Activated CD4-positive, alpha-beta T cell treated with anti-CD3 and anti-CD28 coated beads, Interleukin-2, amount 10 ng/mL, durations not matched to agents 24 days and 14 days (primary cell): ENCODE measurements at regions of chr1 and their contacts with region 1.

Region 1: GRCh38 chr1:12619792-12620487 is 1.9 kb upstream of the DHRS3 start:
- DNase-seq: peak; percentile 94
- H3K4me3 Mint-ChIP-seq: peak overlapping the region; percentile 99
- H3K27ac Mint-ChIP-seq: peak overlapping the region; percentile 75
- H3K4me1 Mint-ChIP-seq: peaks cover 47% of the 10 kb centered on the region
- H3K27me3 Mint-ChIP-seq: no peaks in the 10 kb centered on the region

Region 2: DNA sequence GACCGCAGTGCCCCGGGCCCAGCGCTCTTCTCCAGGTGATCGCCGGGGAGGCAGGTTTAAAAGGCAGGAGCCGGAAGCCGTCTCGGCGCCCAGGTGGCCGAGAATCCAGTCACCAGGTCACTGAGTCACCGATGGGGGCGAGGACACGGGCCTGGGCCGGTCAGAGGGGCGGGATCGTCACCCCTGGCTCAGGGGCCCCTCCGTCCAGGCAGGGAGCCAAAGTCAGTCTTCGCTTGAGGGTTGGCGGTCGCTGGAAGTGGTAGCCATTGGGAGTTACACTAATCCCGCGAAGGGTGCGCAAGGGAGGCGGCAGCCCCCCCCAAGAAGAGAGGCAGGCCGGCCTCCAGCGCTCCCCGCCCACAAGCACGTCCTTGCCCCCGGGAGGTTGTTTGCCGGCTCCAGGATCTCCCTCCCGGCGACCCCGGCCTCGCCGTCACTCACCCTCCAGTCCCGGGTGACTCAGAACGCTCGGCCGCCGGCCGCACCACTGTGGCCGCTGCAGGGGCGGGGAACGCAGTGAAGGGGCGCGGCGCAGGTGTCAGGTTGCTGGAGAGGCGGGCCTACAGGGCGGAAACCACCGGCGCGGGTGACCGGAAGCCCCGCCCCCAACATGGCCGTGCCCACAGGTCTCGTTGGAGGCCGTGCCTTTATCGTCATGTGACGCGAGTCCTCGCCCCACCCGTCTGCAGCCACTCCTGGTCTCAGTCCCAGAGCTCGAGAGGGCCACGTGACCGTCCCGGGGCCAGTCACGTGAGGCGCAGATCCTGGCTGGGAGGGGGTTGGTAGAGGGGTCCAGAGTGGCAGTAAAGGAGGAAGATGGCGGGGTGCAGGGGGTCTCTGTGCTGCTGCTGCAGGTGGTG is 814.3 kb before region 1 on chr1 and contains the starts of genes CLCN6 and MTHFR:
- intact Hi-C with region 1: no loop called
- DNase-seq: peak; percentile 100
- H3K4me3 Mint-ChIP-seq: peak within 1 kb of the TSS; percentile 99
- H3K27ac Mint-ChIP-seq: peak within 1 kb of the TSS; percentile 95
- H3K4me1 Mint-ChIP-seq: peaks cover 53% of the 10 kb centered on the region
- H3K27me3 Mint-ChIP-seq: no peaks in the 10 kb centered on the region
- total RNA-seq, gene CLCN6: 12.7 and 15.2 TPM in 2 replicates
- total RNA-seq, gene MTHFR: 15.6 and 18.4 TPM in 2 replicates

Region 3: GRCh38 chr1:12067900-12068821 is 551.8 kb before region 1 on chr1:
- intact Hi-C with region 1: loop called (anchors 5 kb)
- DNase-seq: peak; percentile 81
- H3K4me3 Mint-ChIP-seq: peak overlapping the region; percentile 71
- H3K27ac Mint-ChIP-seq: peak overlapping the region; percentile 94
- H3K4me1 Mint-ChIP-seq: peaks cover 55% of the 10 kb centered on the region
- H3K27me3 Mint-ChIP-seq: peaks cover 4% of the 10 kb centered on the region

Region 4: DNA sequence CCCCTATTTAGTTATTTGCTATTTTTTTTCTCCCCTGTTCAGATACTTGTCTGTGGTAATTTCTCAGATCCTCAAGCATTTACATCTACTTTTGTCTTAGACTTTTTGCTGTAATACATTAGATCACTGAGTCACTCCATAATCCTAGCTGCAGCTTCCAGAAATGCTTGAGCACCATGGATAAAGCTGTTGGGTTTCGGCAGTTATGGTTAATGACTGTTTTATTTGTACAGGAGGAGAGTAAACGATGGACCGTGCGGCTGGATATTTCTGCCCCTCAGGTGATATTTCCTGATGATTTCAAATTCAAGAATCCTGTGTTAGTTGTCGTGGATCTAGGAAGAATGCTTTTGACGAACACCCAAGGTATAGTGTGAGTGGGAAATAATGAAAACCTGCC is 347.2 kb before region 1 on chr1:
- intact Hi-C with region 1: loop called (anchors 1 kb)
- DNase-seq: no peak
- H3K4me3 Mint-ChIP-seq: no peak overlapping the region
- H3K27ac Mint-ChIP-seq: no peak overlapping the region
- H3K4me1 Mint-ChIP-seq: no peaks in the 10 kb centered on the region
- H3K27me3 Mint-ChIP-seq: no peaks in the 10 kb centered on the region

Region 5: DNA sequence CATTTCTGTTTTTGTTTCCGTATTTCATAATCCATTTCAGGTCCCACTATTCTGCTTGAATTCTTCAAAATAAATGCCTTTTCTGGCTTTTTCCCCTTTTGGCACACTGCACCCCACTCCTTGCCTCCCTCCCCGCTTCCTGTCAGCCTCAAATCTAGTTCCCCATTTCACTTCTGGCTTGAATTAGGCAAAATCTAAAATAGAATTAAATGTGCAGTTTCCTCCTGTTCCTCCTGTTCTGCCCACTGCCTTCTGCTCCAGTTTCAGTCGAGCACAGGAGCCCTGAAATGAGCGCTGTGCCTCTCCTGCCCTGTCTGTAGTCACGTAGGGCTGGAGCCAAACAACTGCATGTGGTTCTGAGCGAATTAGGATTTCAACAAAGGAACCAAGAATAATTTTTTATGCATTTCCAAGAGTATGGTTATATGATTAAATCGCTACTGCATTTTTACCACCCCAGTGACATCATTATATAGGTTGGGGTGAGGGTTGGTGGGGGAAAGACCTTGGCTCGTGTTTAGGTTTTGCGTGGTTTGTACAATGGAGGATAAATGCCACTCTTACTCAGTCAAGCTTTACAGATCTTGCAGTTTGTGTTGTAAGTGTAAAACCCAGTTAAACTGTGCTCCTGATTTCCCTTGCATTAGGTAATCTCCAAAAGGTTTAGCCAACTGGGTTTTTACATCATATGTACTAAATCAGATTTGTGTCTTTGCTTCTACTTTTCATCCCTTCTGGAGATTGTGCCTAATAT is 275.2 kb before region 1 on chr1:
- intact Hi-C with region 1: loop called (anchors 1 kb)
- DNase-seq: peak; percentile 67
- H3K4me3 Mint-ChIP-seq: peak overlapping the region; percentile 71
- H3K27ac Mint-ChIP-seq: peak overlapping the region; percentile 85
- H3K4me1 Mint-ChIP-seq: peaks cover 42% of the 10 kb centered on the region
- H3K27me3 Mint-ChIP-seq: no peaks in the 10 kb centered on the region

Region 6: DNA sequence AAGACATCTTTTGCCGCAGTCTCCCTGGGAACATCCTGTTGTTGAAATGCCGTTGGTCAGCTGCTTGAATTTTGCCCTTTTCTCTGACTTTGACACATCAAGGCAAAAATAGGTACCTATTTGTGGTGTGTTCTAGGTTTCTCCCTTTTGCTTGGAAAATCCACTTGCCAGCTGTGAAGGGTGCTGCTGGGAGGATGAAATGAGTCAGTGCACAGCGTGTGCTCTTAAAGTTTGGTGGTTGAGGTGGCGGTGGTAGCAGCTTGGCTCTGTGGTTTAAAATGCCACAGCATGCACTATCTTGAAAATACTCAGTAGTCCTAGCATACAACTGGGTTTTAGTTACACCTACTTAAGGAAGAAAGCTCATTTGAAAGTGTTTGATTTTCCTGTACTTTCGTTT is 185.8 kb before region 1 on chr1:
- intact Hi-C with region 1: loop called (anchors 1 kb)
- DNase-seq: peak; percentile 90
- H3K4me3 Mint-ChIP-seq: peak overlapping the region; percentile 23
- H3K27ac Mint-ChIP-seq: peak overlapping the region; percentile 85
- H3K4me1 Mint-ChIP-seq: peaks cover 64% of the 10 kb centered on the region
- H3K27me3 Mint-ChIP-seq: no peaks in the 10 kb centered on the region

Region 7: GRCh38 chr1:12518931-12519692 is 100.8 kb before region 1 on chr1:
- intact Hi-C with region 1: loop called (anchors 2 kb)
- DNase-seq: no peak
- H3K4me3 Mint-ChIP-seq: peak overlapping the region; percentile 35
- H3K27ac Mint-ChIP-seq: peak overlapping the region; percentile 81
- H3K4me1 Mint-ChIP-seq: peaks cover 29% of the 10 kb centered on the region
- H3K27me3 Mint-ChIP-seq: no peaks in the 10 kb centered on the region

Region 8: DNA sequence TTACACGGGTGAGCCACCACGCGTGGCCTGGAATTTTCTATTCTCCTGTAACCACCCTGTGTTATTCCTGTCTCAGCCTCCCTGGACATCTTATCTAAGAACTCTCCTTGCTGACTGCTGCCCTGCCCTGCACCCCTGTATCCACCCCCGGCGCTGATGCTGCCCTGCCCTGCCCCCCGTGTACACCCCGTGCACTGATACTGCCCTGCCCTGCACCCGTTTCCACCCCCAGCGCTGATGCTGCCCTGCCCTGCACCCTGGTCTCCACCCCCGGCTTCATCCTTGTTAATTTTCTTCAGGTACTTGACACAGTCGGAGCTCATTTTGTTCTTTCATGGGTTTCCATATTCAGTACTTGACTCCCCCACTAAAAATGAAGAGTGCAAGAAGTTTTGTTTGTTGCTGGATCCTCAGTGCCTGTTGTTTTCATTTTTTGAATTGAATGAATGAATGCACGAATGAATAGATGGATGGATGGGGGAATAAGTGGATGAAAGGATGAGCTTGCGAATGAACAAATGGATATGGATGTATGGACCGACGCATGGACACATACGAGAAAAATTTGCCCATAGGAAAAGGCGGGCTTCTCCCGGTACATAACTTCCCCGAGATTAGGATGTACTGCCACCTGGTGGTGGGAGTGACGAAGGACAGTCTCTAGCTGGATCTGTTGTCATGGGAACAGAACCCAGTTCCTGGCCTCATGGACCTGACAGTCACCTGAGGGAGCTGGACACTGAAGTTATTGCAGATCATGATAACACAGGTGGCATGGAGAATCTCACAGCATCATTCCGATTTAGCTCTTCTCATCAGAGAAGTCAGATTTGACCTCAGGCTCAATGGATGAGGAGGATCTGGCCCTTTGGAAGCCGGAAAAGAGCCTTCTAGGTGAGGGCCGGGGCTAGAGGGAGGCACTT is 38.9 kb after region 1 on chr1:
- intact Hi-C with region 1: loop called (anchors 1 kb)
- DNase-seq: peak; percentile 92
- H3K4me3 Mint-ChIP-seq: peak overlapping the region; percentile 48
- H3K27ac Mint-ChIP-seq: peak overlapping the region; percentile 6
- H3K4me1 Mint-ChIP-seq: peaks cover 6% of the 10 kb centered on the region
- H3K27me3 Mint-ChIP-seq: peaks cover 11% of the 10 kb centered on the region

Region 9: GRCh38 chr1:12669529-12670068 is 49.7 kb after region 1 on chr1:
- intact Hi-C with region 1: no loop called
- DNase-seq: no peak
- H3K4me3 Mint-ChIP-seq: no peak overlapping the region
- H3K27ac Mint-ChIP-seq: no peak overlapping the region
- H3K4me1 Mint-ChIP-seq: no peaks in the 10 kb centered on the region
- H3K27me3 Mint-ChIP-seq: peaks cover 20% of the 10 kb centered on the region